ENCODE measurements at regions of chr9 and their contacts with region 1.

Region 1: GRCh38 chr9:83980395-83981125 is at the start of gene RMI1:
- DNase-seq: peak; percentile 88

Region 2: DNA sequence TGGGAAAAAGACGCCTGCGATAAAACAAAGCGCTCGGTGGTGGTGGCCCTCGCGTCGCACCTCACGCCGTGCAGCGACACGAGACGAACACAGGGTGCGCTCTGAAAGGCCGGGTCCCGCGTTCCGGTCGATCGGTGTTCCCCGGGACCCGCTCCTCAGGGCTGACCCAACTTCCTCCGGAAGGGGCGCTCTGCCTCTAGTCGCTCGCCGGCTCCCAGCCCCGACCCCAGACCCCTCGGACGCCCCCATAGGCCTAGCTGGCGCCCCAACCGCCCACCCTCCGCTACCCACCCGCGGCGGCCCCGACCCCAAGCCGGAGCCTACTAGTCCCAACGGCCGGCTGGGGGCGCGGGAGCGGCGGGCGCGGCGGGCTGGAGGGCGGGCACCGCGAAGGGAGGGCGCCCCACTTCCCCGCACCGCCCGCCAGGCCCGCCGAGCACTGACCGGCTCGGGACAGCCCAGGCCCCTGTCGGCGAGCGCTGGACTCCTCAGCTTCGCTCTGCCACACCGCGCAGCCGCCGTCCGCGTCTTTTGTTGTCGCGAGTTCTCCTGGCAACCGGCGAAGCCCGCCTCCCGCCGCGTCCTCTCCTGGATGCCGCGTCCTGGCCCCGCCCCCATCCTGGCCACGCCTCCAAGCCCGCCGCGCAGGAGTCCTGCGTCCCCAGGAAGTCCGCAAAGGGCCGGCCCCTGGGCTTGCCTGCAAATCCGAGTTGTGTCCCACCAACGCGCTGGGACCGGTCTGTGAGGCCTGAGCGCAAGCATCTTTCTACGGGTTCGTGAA is 59.4 kb before region 1 on chr9 and contains the start of gene KIF27:
- CTCF ChIA-PET with region 1: no interaction called
- POLR2A ChIA-PET with region 1: interaction called, 10 read pairs
- DNase-seq: peak; percentile 95

Region 3: GRCh38 chr9:83959061-83959460 is 21.5 kb before region 1 on chr9:
- CTCF ChIA-PET with region 1: no interaction called
- POLR2A ChIA-PET with region 1: interaction called, 34 read pairs
- DNase-seq: no peak

Region 4: GRCh38 chr9:83965350-83966208 is 15.0 kb before region 1 on chr9:
- CTCF ChIA-PET with region 1: no interaction called
- POLR2A ChIA-PET with region 1: interaction called, 34 read pairs
- DNase-seq: no peak

Region 5: GRCh38 chr9:84001621-84002020 is 21.1 kb after region 1 on chr9:
- CTCF ChIA-PET with region 1: no interaction called
- POLR2A ChIA-PET with region 1: no interaction called
- DNase-seq: no peak